Natural killer cell (primary cell): ENCODE measurements at regions of chrX and their contacts with region 1.

Region 1: DNA sequence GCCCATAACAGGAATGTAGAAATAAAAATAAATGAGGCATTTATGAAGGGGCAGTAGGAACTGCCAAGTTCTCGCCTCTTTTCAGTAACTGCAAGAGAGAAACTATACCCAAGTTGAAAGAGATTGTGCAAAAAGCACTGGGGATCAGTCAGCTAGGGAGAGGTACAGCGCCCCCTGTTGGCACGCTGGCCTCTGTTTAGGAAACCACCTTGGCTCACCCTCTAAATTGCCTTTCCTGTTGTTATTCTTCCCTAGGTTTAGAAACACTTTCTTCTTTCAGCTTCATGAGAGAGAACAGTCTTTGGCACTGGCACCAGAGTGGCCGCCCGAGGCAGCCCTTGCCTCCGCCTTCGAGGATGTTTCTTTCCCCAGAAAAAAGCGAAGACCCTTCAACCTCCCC is 348.5 kb downstream of the MID1IP1 start:
- DNase-seq: peak; percentile 28 to 73
- ATAC-seq: peak in 1 of 3 donors; percentile 49
- H3K4me3 ChIP-seq: no peak overlapping the region
- H3K4me3 Mint-ChIP-seq: no peak overlapping the region
- H3K27ac ChIP-seq: no peak overlapping the region
- H3K27ac Mint-ChIP-seq: no peak overlapping the region
- H3K4me1 ChIP-seq: peaks cover 2% of the 10 kb centered on the region
- H3K4me1 Mint-ChIP-seq: no peaks in the 10 kb centered on the region
- H3K27me3 ChIP-seq: no peaks in the 10 kb centered on the region
- H3K27me3 Mint-ChIP-seq: peaks cover 8 to 28% of the 10 kb centered on the region in 2 donors
- CTCF ChIP-seq: peak; percentile 54

Region 2: GRCh38 chrX:38754102-38754790 is 395.5 kb before region 1 on chrX:
- intact Hi-C with region 1: loop called (anchors 1 kb)
- DNase-seq: peak in 1 of 2 donors; percentile 70
- ATAC-seq: peak in 2 of 3 donors; percentile 49 to 72
- H3K4me3 ChIP-seq: no peak overlapping the region
- H3K4me3 Mint-ChIP-seq: no peak overlapping the region
- H3K27ac ChIP-seq: no peak overlapping the region
- H3K27ac Mint-ChIP-seq: no peak overlapping the region
- H3K4me1 ChIP-seq: no peaks in the 10 kb centered on the region
- H3K4me1 Mint-ChIP-seq: no peaks in the 10 kb centered on the region
- H3K27me3 ChIP-seq: no peaks in the 10 kb centered on the region
- H3K27me3 Mint-ChIP-seq: peaks cover 12 to 26% of the 10 kb centered on the region in 2 donors
- CTCF ChIP-seq: peak; percentile 40

Region 3: DNA sequence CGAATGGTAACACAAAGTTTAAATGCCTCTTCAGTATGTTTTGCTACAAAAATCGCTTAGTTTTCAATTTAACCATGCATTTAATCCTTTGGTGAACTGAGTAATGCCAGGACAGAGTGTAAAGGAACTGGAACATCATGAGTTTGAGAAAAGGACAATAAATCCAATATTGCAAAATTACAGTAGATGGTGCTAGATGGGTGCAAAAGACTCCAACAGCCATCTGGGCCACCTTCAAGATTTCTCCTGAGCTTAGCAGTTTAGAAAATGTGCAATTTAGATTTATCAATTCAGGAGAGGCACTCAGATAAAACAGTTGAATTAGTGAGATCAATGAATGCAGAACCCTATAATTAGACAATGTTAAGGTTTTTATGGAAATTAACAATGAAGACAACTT is 381.7 kb before region 1 on chrX:
- intact Hi-C with region 1: loop called (anchors 5 kb)
- DNase-seq: peak in 1 of 2 donors; percentile 54
- ATAC-seq: no peak
- H3K4me3 ChIP-seq: no peak overlapping the region
- H3K4me3 Mint-ChIP-seq: no peak overlapping the region
- H3K27ac ChIP-seq: no peak overlapping the region
- H3K27ac Mint-ChIP-seq: no peak overlapping the region
- H3K4me1 ChIP-seq: no peaks in the 10 kb centered on the region
- H3K4me1 Mint-ChIP-seq: no peaks in the 10 kb centered on the region
- H3K27me3 ChIP-seq: no peaks in the 10 kb centered on the region
- H3K27me3 Mint-ChIP-seq: peaks cover 4 to 12% of the 10 kb centered on the region in 2 donors
- CTCF ChIP-seq: peak; percentile 39

Region 4: DNA sequence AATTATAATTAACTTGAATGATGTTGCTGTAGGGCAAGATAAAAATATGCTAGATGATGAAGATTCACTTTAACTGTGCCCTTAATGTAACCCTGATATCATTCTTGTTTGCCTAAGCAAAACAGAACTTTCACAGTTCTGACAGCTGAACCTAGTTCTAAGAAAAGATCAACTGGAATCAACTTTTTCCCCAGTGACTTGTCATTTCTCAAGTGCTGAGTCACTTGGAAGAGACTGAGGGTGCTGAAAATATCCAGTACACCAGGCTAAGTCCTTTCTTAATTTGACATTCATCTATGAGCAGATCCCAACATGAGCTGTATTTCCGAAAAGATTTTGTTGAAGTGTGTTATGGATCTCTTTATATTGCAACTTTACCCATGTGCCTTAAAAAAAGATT is 208.1 kb before region 1 on chrX:
- intact Hi-C with region 1: no loop called
- DNase-seq: no peak
- ATAC-seq: no peak
- H3K4me3 ChIP-seq: no peak overlapping the region
- H3K4me3 Mint-ChIP-seq: no peak overlapping the region
- H3K27ac ChIP-seq: no peak overlapping the region
- H3K27ac Mint-ChIP-seq: no peak overlapping the region
- H3K4me1 ChIP-seq: no peaks in the 10 kb centered on the region
- H3K4me1 Mint-ChIP-seq: no peaks in the 10 kb centered on the region
- H3K27me3 ChIP-seq: no peaks in the 10 kb centered on the region
- H3K27me3 Mint-ChIP-seq: peaks cover 0 to 1% of the 10 kb centered on the region in 2 donors
- CTCF ChIP-seq: no peak

Region 5: DNA sequence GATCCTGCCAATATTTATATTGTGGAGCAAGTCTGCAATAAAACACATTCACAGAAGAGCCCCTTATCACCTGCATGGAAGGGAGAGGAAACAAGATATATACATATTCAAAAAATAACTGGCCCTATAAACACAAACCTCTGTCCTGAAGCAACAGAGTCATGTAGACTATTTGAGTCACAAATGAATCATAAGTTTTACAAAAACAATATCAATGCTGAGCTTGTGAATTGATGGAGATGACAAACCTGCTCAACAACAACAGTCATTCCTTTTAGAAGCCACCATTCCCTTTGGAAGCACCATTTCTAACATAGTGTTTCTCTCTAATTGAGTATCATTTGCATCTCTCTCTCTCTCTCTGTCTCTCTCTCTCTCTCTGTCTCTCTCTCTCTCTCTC is 34.6 kb before region 1 on chrX:
- intact Hi-C with region 1: no loop called
- DNase-seq: no peak
- ATAC-seq: no peak
- H3K4me3 ChIP-seq: no peak overlapping the region
- H3K4me3 Mint-ChIP-seq: no peak overlapping the region
- H3K27ac ChIP-seq: no peak overlapping the region
- H3K27ac Mint-ChIP-seq: no peak overlapping the region
- H3K4me1 ChIP-seq: no peaks in the 10 kb centered on the region
- H3K4me1 Mint-ChIP-seq: no peaks in the 10 kb centered on the region
- H3K27me3 ChIP-seq: no peaks in the 10 kb centered on the region
- H3K27me3 Mint-ChIP-seq: peaks cover 5 to 29% of the 10 kb centered on the region in 2 donors
- CTCF ChIP-seq: no peak

Region 6: GRCh38 chrX:39928704-39929385 is 779.1 kb after region 1 on chrX:
- intact Hi-C with region 1: no loop called
- DNase-seq: no peak
- ATAC-seq: no peak
- H3K4me3 ChIP-seq: no peak overlapping the region
- H3K4me3 Mint-ChIP-seq: no peak overlapping the region
- H3K27ac ChIP-seq: no peak overlapping the region
- H3K27ac Mint-ChIP-seq: no peak overlapping the region
- H3K4me1 ChIP-seq: no peaks in the 10 kb centered on the region
- H3K4me1 Mint-ChIP-seq: no peaks in the 10 kb centered on the region
- H3K27me3 ChIP-seq: no peaks in the 10 kb centered on the region
- H3K27me3 Mint-ChIP-seq: no peaks in the 10 kb centered on the region
- CTCF ChIP-seq: no peak